Caco-2 (cell line): ENCODE measurements at regions of chr2 and their contacts with region 1.

Region 1: GRCh38 chr2:186780701-186781348 is 68.1 kb downstream of the ZSWIM2 start:
- DNase-seq: peak; percentile 61 to 63
- H3K4me3 ChIP-seq: no peak overlapping the region
- H3K4me3 Mint-ChIP-seq: no peak overlapping the region
- H3K27ac Mint-ChIP-seq: no peak overlapping the region
- H3K4me1 ChIP-seq: no peaks in the 10 kb centered on the region
- H3K4me1 Mint-ChIP-seq: no peaks in the 10 kb centered on the region
- H3K27me3 ChIP-seq: no peaks in the 10 kb centered on the region
- H3K27me3 Mint-ChIP-seq: no peaks in the 10 kb centered on the region
- CTCF ChIP-seq: peak; percentile 42 to 43

Region 2: DNA sequence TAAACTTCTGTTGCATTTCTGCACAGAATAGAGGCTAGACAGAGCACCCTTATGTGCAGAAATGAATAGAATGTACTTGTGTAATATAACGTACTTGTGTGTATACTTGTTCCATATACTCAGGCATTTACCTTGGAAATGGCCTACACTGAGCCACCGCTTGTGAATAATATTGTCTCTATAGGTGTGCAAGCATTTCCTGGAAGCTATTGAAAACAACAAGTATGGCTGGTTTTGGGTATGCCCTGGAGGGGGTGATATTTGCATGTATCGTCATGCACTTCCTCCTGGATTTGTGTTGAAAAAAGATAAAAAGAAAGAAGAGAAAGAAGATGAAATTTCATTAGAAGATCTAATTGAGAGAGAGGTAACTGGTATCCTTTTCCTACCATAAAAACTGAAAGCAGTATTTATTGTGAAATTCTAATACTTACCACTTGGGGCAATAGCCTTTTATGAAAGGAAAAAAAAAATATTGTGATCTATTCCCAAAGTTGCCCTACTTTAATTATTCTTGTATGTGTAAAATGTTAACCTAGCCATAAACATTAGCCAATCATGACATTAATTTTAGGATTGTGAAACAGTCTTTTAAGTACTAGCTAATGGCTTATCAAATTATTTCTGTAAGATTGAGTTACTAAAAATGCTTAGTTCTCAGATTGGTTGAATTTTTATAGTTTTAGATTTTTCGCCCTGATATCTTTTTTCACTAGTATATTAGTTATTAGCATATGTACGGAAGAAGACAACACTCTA is 276.8 kb before region 1 on chr2:
- CTCF ChIA-PET with region 1: no interaction called
- POLR2A ChIA-PET with region 1: no interaction called
- intact Hi-C with region 1: loop called (anchors 1 kb)
- DNase-seq: no peak
- H3K4me3 ChIP-seq: no peak overlapping the region
- H3K4me3 Mint-ChIP-seq: no peak overlapping the region
- H3K27ac Mint-ChIP-seq: no peak overlapping the region
- H3K4me1 ChIP-seq: 0 out of 2 replicates have a peak, but pooled peaks cover 4% of the 10 kb centered on the region
- H3K4me1 Mint-ChIP-seq: peaks cover 9% of the 10 kb centered on the region
- H3K27me3 ChIP-seq: no peaks in the 10 kb centered on the region
- H3K27me3 Mint-ChIP-seq: no peaks in the 10 kb centered on the region
- CTCF ChIP-seq: peak; percentile 41 to 62

Region 3: GRCh38 chr2:186641807-186642321 is 139.0 kb before region 1 on chr2:
- CTCF ChIA-PET with region 1: interaction called, 8 read pairs
- POLR2A ChIA-PET with region 1: no interaction called
- intact Hi-C with region 1: loop called (anchors 1 kb)
- DNase-seq: peak; percentile 45 to 67
- H3K4me3 ChIP-seq: no peak overlapping the region
- H3K4me3 Mint-ChIP-seq: no peak overlapping the region
- H3K27ac Mint-ChIP-seq: no peak overlapping the region
- H3K4me1 ChIP-seq: no peaks in the 10 kb centered on the region
- H3K4me1 Mint-ChIP-seq: peaks cover 14% of the 10 kb centered on the region
- H3K27me3 ChIP-seq: no peaks in the 10 kb centered on the region
- H3K27me3 Mint-ChIP-seq: no peaks in the 10 kb centered on the region
- CTCF ChIP-seq: peak; percentile 60 to 82

Region 4: GRCh38 chr2:186659383-186659782 is 121.4 kb before region 1 on chr2:
- CTCF ChIA-PET with region 1: no interaction called
- POLR2A ChIA-PET with region 1: no interaction called
- intact Hi-C with region 1: loop called (anchors 5 kb)
- DNase-seq: no peak
- H3K4me3 ChIP-seq: no peak overlapping the region
- H3K4me3 Mint-ChIP-seq: no peak overlapping the region
- H3K27ac Mint-ChIP-seq: no peak overlapping the region
- H3K4me1 ChIP-seq: no peaks in the 10 kb centered on the region
- H3K4me1 Mint-ChIP-seq: no peaks in the 10 kb centered on the region
- H3K27me3 ChIP-seq: no peaks in the 10 kb centered on the region; the same call in 1 of the 2 replicates
- H3K27me3 Mint-ChIP-seq: no peaks in the 10 kb centered on the region
- CTCF ChIP-seq: no peak